ENCODE measurements at regions of chr1 and their contacts with region 1.

Region 1: GRCh38 chr1:203504397-203505250 is 10.7 kb downstream of the OPTC start:
- DNase-seq: peak; percentile 84 to 88
- H3K4me3 ChIP-seq: no peak overlapping the region
- H3K27ac ChIP-seq: no peak overlapping the region
- H3K4me1 ChIP-seq: peaks cover 5 to 15% of the 10 kb centered on the region in 2 donors
- H3K27me3 ChIP-seq: no peaks in the 10 kb centered on the region
- CTCF ChIP-seq: peak; percentile 38 to 86 (median 75)
- POLR2A ChIP-seq: no peak

Region 2: DNA sequence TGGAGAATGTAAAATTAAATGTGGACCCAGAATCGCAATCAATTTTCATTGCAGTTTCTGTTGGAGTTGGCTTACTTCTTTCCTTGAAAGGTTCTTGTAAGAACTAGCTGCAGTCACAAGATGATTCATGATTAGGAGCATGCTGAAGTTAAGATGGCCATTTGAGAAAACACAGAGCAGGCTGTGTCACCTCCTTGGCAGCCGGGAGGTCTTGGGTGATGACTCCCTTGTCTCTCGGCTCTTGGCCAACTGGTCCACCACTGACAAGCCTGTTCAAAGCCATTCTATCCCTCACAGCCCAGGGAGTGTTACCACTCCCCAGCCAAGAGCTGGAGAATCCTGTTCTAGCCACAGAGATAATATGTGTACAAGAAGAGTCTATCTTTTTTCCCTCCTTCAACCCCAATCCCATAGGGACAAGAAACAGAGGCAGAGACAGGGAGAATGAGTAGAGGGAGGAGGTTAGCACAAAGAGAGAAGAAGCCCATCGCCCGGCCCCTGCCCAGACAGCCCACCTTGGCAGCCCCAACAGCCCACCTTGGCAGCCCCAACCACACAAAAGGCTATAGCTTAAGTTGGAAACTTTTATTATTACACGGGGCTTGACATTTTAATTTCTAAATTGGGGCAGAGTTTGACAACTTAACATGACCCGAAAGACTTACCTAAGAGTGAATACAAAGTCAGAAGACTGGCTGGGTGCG is 30.1 kb after region 1 on chr1:
- intact Hi-C with region 1: no loop called
- DNase-seq: peak; percentile 24 to 29
- H3K4me3 ChIP-seq: no peak overlapping the region
- H3K27ac ChIP-seq: no peak overlapping the region
- H3K4me1 ChIP-seq: no peaks in the 10 kb centered on the region
- H3K27me3 ChIP-seq: no peaks in the 10 kb centered on the region
- CTCF ChIP-seq: no peak
- POLR2A ChIP-seq: no peak

Region 3: GRCh38 chr1:203625628-203626019 is 121.0 kb after region 1 on chr1:
- intact Hi-C with region 1: loop called (anchors 10 kb)
- DNase-seq: peak in 1 of 2 donors; percentile 25
- H3K4me3 ChIP-seq: no peak overlapping the region
- H3K27ac ChIP-seq: no peak overlapping the region
- H3K4me1 ChIP-seq: peaks cover 17 to 30% of the 10 kb centered on the region in 2 donors
- H3K27me3 ChIP-seq: no peaks in the 10 kb centered on the region
- CTCF ChIP-seq: peak in 4 of 6 experiments; percentile 37 to 63 (median 48)
- POLR2A ChIP-seq: no peak

Region 4: DNA sequence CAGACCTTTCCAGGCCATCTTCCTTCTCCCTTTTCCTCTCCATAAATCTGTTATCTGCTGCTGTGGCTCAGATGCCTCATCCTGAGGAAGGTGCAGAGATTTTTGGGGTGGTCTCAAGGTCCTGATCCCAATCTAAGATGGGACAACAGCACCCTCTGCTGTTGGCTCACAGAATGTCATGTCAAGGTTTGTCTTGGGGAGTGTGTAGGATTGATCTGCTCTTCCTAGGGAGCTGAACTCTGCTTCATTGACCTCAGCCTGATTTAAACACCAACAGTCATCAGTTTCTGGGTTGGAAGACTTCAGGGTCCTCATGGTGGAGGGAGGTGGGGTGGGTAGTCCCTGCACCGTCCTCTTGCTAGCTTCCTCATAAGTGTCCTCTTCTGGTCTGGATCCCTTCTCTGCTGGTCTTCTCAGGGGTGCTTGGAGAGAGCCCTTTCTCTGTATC is 197.5 kb after region 1 on chr1:
- intact Hi-C with region 1: loop called (anchors 2 kb)
- DNase-seq: peak; percentile 43 to 62
- H3K4me3 ChIP-seq: no peak overlapping the region
- H3K27ac ChIP-seq: no peak overlapping the region
- H3K4me1 ChIP-seq: no peaks in the 10 kb centered on the region
- H3K27me3 ChIP-seq: no peaks in the 10 kb centered on the region
- CTCF ChIP-seq: peak; percentile 63 to 98 (median 84)
- POLR2A ChIP-seq: no peak